ENCODE measurements at regions of chr3 and their contacts with region 1.

Region 1: DNA sequence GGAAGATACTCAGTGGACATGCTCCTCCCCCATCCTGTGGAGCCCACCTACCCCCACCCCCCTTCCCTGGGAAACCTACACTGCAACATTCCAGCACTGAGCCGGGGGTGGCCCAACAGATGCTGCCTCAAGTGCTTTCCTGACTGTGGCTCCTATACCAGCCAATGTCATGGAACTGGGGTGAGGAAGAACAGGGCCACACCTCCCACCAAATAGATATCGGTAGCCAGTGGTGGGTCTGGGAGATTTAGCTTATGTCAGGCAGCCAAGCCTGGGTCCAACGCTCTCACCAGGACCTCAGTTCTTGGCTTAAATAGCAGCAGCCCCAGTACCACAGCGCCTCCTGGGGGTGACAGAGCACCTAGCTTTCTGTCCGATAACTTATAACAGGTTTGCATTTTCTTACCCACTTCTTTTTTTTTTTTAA is 30.3 kb downstream of the CDC25A start:
- DNase-seq: peak; percentile 92

Region 2: DNA sequence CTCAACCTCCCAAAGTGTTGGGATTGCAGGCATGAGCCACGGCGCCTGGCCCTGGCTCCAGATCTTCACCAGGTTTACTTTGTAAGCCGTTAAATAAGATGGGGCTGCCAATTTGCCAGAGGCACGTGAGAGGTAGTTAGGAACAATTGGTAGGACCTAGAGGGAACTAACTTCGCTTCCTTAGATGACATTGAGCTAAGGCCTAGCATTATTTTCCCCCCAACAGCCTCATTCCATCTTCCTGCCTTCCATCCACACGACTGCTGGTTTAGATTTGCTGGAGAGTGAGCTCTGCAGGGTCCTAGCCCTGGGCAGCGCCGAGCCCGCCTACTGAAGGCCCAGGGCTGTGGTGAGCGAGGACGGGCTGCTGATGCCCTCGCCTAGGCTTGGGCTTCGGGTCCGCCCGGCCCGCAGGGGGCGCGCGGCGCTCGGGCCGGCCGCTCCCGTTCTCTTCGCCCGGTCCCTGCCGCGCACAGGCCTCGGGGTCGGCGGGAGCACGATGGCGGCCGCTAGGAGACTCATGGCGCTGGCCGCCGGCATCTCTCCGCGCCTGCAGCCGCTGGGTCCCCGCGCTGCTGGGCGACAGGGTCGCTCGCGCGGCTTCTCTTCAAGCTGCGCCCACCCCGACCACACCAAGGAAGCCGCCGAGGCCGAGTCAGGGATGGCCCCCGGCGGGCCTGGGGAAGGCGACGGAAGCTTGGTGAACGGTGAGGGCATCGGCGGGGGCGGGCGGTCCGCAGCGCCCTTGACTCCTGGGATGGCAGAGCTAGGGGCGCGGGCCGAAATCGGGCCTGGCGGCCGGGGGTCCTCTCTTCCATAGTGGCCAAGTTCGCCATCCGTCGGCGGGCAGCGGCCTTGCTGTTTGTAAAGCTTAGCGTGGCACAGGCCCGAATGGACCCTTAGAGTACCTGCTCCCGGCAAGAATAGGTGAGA is 333.2 kb before region 1 on chr3:
- intact Hi-C with region 1: loop called in 1 of 2 experiments (anchors 5 kb)
- DNase-seq: peak; percentile 93